Sciatic nerve (tissue), 2 donors: ENCODE measurements at regions of chr1 and their contacts with region 1.

Region 1: GRCh38 chr1:156740679-156741612 is at the start of gene MRPL24:
- DNase-seq: peak; percentile 97
- ATAC-seq: peak; percentile 96
- total RNA-seq, gene MRPL24: 59.5 TPM

Region 2: DNA sequence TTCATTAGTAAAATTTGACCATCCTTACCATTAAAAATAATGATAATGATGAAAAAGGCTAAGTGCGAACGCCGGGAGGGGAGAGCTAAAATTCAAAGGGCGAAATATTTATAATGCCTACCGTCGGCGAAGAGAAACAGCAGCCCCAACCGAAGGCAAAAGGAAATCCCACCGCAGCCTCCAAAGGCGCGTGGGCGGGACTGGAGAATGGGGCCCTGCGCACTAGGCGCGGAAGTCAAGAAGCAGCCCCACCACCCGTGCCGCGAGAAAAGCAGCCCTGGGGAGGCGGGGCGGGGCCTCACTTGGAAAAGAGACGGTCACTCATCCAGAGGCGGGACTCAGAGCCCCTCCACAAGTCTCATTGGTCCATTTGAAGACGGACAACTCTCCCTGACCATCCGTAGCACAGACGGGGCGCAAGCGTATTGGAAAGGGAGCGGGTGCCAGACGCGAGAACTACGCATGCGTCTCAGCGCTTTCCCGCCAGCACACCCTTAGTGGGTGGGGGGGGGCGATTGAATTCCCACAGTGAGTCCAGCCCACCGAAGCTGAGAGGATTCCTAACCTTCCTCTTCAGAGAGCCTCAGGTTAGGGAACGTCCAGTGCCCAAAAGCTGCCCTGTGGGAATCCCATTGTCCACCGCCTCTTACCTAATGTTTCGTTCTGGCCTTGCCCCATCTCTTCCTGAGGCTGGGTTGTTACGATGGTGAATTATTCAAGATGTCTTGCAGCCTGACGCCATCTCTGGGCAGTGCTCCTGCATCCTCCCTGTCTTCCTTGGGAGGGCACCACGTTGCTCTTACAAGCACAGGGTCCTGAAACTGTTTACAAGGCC is 1513.5 kb before region 1 on chr1:
- intact Hi-C with region 1: loop called (anchors 5 kb)
- DNase-seq: peak; percentile 98
- ATAC-seq: peak; percentile 98

Region 3: DNA sequence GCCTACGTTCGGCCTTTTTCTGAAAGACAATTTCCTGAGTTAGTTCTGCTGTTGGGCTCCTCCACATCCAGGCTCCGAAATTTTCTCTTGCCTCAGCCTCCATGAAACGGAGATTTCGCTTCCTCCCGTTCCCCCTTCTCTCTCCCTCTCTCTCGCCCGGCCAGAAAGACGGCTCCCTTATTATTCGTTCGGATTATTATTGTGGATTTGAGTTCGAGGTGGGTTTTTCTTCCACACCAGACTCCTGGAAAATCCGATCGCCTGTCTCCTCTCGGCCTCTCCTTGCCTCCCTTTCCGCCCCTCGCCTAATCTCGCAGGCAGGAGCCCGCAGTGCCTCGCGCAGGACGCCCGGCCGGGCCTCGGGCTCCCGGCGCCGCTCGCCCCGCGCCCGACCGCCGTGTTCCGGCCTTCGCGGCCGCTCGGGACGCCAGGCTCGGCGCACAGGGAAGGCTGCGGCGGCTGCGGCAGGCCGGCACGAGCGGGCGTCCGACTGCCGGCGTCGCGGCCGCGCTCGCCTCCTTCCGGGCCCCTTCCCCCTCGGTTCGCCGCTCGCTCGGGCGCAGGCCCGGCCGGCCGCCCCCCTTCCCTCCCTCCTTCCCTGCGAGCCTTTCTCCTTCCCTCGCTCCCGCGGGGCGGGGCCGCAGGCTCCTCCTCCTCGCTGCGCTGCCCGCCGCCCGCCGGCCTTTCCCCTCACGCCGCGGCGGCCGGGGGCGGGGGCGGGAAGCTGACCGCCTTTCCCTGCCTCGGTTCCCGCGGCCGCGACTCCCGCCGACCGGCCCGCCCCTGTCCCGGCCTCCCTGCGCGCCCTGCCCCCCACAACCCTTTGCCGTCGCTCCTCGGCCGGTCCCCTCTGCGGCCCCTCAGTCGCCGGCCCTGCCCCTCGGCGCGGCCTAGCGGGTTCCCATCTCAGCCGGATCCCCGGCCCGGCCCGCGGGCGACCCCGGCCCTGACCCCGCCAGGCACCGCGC is 304.6 kb after region 1 on chr1 and contains the start of gene ARHGEF11:
- intact Hi-C with region 1: loop called (anchors 5 kb)
- DNase-seq: peak; percentile 95
- ATAC-seq: peak; percentile 99
- total RNA-seq, gene ARHGEF11: 38.4 TPM